Activated CD4-positive, alpha-beta memory T cell treated with anti-CD3 and anti-CD28 coated beads, Interleukin-2, amount 10 ng/mL, durations not matched to agents 7 days and 5 days (primary cell): ENCODE measurements at regions of chr1 and their contacts with region 1.

Region 1: GRCh38 chr1:205387845-205388244 is 31.1 kb upstream of the KLHDC8A start:
- DNase-seq: no peak
- H3K4me3 Mint-ChIP-seq: no peak overlapping the region
- H3K27ac Mint-ChIP-seq: no peak overlapping the region
- H3K4me1 Mint-ChIP-seq: no peaks in the 10 kb centered on the region
- H3K27me3 Mint-ChIP-seq: peaks cover 24% of the 10 kb centered on the region

Region 2: GRCh38 chr1:205287767-205288559 is 99.9 kb before region 1 on chr1:
- CTCF ChIA-PET with region 1: no interaction called
- POLR2A ChIA-PET with region 1: no interaction called
- DNase-seq: peak; percentile 89
- H3K4me3 Mint-ChIP-seq: peak overlapping the region; percentile 56
- H3K27ac Mint-ChIP-seq: peak overlapping the region; percentile 91
- H3K4me1 Mint-ChIP-seq: peaks cover 65% of the 10 kb centered on the region
- H3K27me3 Mint-ChIP-seq: peaks cover 7% of the 10 kb centered on the region

Region 3: GRCh38 chr1:205354259-205354904 is 33.5 kb before region 1 on chr1:
- CTCF ChIA-PET with region 1: interaction called, 10 read pairs
- POLR2A ChIA-PET with region 1: no interaction called
- DNase-seq: peak; percentile 67
- H3K4me3 Mint-ChIP-seq: no peak overlapping the region
- H3K27ac Mint-ChIP-seq: no peak overlapping the region
- H3K4me1 Mint-ChIP-seq: no peaks in the 10 kb centered on the region
- H3K27me3 Mint-ChIP-seq: peaks cover 21% of the 10 kb centered on the region

Region 4: DNA sequence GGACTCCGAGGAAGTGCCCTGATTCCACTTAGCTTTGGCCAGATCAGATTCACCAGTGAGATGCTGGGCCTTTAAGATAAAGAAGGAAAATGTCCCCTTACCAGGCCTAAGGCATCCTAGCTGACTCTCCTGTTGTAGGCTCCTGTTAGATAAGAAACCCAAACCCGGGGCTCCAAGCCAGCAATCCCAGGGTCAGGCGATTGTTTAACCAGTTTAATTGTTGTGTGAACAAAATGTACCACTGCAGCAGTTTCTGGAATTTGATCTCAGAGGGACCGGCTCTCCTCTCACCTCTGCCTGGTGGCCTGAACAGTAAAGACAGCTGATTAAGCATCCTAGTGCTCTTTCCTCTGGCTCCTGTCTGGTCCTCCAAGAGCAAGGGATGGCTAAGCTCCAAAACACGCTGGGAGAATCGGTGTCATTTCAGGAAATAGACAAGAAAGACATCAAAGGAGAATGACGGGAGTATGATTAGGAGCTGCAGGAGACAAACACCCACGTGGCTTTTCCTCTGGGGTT is 21.8 kb before region 1 on chr1:
- CTCF ChIA-PET with region 1: no interaction called
- POLR2A ChIA-PET with region 1: no interaction called
- DNase-seq: no peak
- H3K4me3 Mint-ChIP-seq: no peak overlapping the region
- H3K27ac Mint-ChIP-seq: no peak overlapping the region
- H3K4me1 Mint-ChIP-seq: no peaks in the 10 kb centered on the region
- H3K27me3 Mint-ChIP-seq: peaks cover 23% of the 10 kb centered on the region